HAP-1 (cell line): ENCODE measurements at regions of chr11 and their contacts with region 1.

Region 1: GRCh38 chr11:109037856-109038780 is 373.2 kb downstream of the DDX10 start:
- DNase-seq: peak; percentile 83 to 93
- H3K4me3 ChIP-seq: no peak overlapping the region
- H3K4me1 ChIP-seq: peaks cover 55% of the 10 kb centered on the region
- H3K27me3 ChIP-seq: no peaks in the 10 kb centered on the region

Region 2: DNA sequence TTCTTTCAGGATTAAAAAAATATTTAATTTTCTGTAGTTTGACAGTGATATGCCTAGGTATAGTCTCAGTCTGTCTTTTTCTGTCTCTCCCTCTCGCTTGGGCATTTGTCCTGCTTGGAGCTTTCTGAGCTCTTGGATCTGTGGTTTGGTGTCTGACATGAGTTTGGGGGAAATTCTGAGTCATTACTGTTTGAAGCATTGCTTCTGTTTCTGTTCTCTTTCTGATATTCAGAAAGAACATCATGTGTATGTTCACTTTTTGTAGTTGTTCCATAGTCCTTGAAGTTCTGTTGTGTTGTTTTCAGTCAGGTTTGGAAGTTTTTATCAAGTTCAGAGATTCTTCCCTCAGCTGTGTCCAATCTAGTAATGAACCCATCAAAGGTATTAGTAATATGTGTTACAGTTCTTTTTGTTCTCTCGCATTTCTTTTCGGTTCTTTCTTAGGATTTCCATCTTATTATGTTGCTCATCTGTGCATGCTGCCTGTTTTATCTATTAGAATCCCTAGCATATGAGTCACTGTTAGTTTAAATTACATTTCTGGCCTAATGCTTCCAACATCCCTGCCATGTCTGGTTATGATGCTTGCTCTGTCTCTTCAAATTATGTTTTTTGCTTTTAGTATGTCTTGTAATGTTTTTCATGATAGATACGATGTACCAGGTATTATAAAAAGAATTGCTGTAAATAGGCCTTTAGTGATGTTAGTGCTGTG is 324.9 kb before region 1 on chr11:
- in situ Hi-C with region 1: loop called (anchors 25 kb)
- DNase-seq: no peak
- H3K4me3 ChIP-seq: no peak overlapping the region
- H3K4me1 ChIP-seq: no peaks in the 10 kb centered on the region
- H3K27me3 ChIP-seq: no peaks in the 10 kb centered on the region

Region 3: DNA sequence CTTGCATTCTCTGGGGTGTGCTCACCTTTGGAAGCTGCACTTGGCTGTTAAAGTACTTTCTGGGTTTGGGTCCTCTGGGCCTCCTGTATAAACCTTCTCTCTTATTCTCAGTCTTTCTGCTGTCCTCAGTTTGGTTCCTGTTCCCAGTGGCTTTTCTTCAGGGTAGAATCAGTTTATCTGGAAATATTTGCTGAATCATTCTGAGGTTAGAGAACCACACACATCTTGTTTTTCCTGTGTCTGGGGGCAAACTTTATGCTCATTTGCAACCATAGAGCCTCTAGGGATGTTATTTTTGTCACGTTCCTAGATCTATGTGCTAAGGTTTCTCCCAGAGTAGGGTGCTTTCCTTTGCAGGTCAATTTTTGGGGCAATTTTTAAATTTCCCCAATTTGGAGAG is 159.5 kb after region 1 on chr11:
- in situ Hi-C with region 1: no loop called
- DNase-seq: no peak
- H3K4me3 ChIP-seq: no peak overlapping the region
- H3K4me1 ChIP-seq: no peaks in the 10 kb centered on the region
- H3K27me3 ChIP-seq: no peaks in the 10 kb centered on the region